Endothelial cell of umbilical vein (primary cell): ENCODE measurements at regions of chr4 and their contacts with region 1.

Region 1: DNA sequence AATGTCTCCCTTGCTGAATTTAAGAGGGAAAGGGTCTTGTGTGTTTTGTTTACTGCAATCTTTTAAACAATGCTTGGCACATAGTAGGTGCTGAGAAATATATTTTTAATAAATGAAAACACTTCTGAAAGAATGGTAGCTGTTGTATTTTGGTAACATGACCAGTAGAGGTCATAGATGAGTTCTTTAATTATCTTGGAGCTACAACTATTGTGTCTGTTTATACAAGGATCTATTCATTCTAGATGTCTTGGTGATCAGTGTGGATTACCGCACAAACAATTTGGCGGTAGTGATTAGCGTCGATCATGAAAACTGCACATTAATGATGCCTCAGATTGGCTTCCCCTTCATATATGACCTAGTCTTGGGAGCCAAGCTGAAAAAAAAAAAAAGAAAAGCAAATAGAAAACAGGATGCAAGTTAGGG is 21.4 kb upstream of the SCRG1 start:
- DNase-seq: peak; percentile 49
- H3K4me3 ChIP-seq: no peak overlapping the region
- H3K27ac ChIP-seq: no peak overlapping the region
- H3K4me1 ChIP-seq: peaks cover 17% of the 10 kb centered on the region
- H3K27me3 ChIP-seq: no peaks in the 10 kb centered on the region
- CTCF ChIP-seq: peak; percentile 4 to 21
- POLR2A ChIP-seq: no peak

Region 2: GRCh38 chr4:173288296-173288695 is 132.0 kb before region 1 on chr4:
- CTCF ChIA-PET with region 1: interaction called, 5 read pairs
- POLR2A ChIA-PET with region 1: no interaction called
- dilution Hi-C with region 1: no loop called
- intact Hi-C with region 1: loop called (anchors 1 kb)
- DNase-seq: peak; percentile 31
- H3K4me3 ChIP-seq: no peak overlapping the region
- H3K27ac ChIP-seq: no peak overlapping the region
- H3K4me1 ChIP-seq: no peaks in the 10 kb centered on the region
- H3K27me3 ChIP-seq: no peaks in the 10 kb centered on the region
- CTCF ChIP-seq: peak; percentile 51 to 53
- POLR2A ChIP-seq: no peak

Region 3: DNA sequence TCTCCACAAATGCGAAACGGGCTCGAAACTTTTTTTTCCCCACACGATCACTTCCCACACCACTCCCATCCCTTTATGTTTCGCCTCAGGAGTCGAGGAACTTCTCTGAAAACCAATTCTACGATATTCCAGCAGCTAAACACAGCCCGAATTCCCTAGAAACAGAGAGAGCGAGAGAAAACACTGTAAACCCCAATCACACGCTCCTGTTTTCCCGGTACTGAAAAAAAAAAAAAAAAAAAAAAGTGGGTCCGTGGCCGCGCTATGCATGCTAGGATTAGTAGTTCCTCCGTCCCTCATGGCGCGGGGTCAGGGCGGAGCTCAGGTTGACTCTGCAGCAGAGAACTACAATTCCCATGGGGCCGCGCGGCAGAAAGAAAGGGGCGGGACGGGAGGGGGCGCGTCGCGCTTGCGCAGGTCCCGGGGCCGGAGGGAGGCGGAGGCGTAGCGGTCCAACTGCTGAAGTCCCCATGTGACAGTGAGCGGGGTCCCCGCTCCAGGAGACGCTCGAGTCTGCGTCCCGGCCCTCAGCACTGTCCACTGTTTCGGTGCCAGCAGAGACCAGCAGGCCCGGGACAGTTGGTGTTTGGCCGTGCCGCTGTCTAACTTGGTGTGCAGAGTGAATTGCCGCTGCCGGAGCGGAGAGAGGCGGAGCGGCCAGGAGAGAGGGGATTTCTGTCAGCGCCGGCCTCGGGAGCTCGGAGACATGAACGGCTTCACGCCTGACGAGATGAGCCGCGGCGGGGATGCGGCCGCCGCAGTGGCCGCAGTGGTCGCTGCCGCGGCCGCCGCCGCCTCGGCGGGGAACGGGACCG is 49.7 kb before region 1 on chr4 and contains the start of gene SAP30:
- CTCF ChIA-PET with region 1: interaction called, 11 read pairs
- POLR2A ChIA-PET with region 1: interaction called, 3 read pairs
- dilution Hi-C with region 1: no loop called
- intact Hi-C with region 1: loop called (anchors 1 kb)
- DNase-seq: peak; percentile 99
- H3K4me3 ChIP-seq: peak within 1 kb of the TSS; percentile 87 to 99 (median 91)
- H3K27ac ChIP-seq: peak within 1 kb of the TSS; percentile 93
- H3K4me1 ChIP-seq: peaks cover 24% of the 10 kb centered on the region
- H3K27me3 ChIP-seq: no peaks in the 10 kb centered on the region
- CTCF ChIP-seq: no peak
- POLR2A ChIP-seq: peak; percentile 95
- total RNA-seq, gene SAP30: 23.8 and 27.1 TPM in 2 replicates

Region 4: GRCh38 chr4:173505924-173506518 is 85.7 kb after region 1 on chr4:
- CTCF ChIA-PET with region 1: interaction called, 13 read pairs
- POLR2A ChIA-PET with region 1: no interaction called
- dilution Hi-C with region 1: no loop called
- intact Hi-C with region 1: no loop called
- DNase-seq: peak; percentile 25
- H3K4me3 ChIP-seq: no peak overlapping the region
- H3K27ac ChIP-seq: no peak overlapping the region
- H3K4me1 ChIP-seq: peaks cover 17% of the 10 kb centered on the region
- H3K27me3 ChIP-seq: peaks cover 83 to 96% of the 10 kb centered on the region in 2 experiments
- CTCF ChIP-seq: peak; percentile 57 to 71
- POLR2A ChIP-seq: no peak

Region 5: GRCh38 chr4:173782660-173783059 is 362.3 kb after region 1 on chr4:
- CTCF ChIA-PET with region 1: no interaction called
- POLR2A ChIA-PET with region 1: no interaction called
- dilution Hi-C with region 1: no loop called
- intact Hi-C with region 1: no loop called
- DNase-seq: no peak
- H3K4me3 ChIP-seq: no peak overlapping the region
- H3K27ac ChIP-seq: no peak overlapping the region
- H3K4me1 ChIP-seq: no peaks in the 10 kb centered on the region
- H3K27me3 ChIP-seq: no peaks in the 10 kb centered on the region
- CTCF ChIP-seq: no peak
- POLR2A ChIP-seq: no peak

Region 6: GRCh38 chr4:174156239-174156826 is 736.0 kb after region 1 on chr4:
- CTCF ChIA-PET with region 1: interaction called, 6 read pairs
- POLR2A ChIA-PET with region 1: no interaction called
- dilution Hi-C with region 1: no loop called
- intact Hi-C with region 1: loop called (anchors 1 kb)
- DNase-seq: peak; percentile 62
- H3K4me3 ChIP-seq: no peak overlapping the region
- H3K27ac ChIP-seq: no peak overlapping the region
- H3K4me1 ChIP-seq: no peaks in the 10 kb centered on the region
- H3K27me3 ChIP-seq: peaks cover 2 to 8% of the 10 kb centered on the region in 2 experiments
- CTCF ChIP-seq: peak; percentile 14 to 55
- POLR2A ChIP-seq: no peak